B cell (primary cell): ENCODE measurements at regions of chr14 and their contacts with region 1.

Region 1: DNA sequence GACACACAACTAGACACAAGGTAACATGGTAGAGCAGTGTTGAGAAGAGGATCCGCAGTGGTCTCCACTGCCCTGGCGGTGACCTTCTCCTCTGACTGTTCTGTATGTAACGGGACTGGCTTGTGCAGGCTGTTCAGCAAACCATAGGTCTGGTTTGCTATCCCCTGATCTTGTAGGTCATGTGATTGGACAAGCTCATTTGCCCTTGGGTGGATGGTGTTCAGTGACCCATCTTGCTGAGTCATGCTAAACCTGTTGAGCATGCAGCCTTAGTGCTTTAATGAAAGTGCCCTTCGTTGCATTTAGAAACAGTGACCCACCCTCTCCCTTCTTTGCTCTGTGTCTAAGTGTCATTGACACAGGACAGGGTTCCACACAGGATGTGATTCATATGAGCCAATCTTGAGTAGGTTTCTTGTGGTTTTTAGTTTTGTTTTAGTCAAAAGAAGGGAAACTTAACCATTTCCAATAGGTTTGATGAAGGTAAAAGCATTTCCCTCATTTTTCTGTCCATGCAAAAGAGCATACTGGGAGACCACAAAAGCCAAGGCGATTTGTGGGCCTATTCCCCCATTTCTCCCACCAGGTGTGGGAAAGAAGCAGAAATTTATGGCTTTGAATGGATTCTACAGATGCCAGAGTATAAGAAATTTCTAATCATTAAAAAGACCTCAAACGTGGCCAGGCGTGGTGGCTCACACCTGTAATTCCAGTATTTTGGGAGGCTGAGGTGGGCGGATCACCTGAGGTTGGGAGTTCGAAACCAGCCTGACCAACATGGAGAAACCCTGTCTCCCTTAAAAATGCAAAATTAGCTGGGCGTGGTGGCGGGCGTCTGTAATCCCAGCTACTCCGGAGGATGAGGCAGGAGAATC is 32.6 kb upstream of the HIF1A start:
- DNase-seq: peak; percentile 59
- ATAC-seq: peak; percentile 66
- H3K4me3 ChIP-seq: peak overlapping the region in 1 of 5 experiments; percentile 52
- H3K4me3 Mint-ChIP-seq: peak overlapping the region; percentile 84
- H3K27ac ChIP-seq: peak overlapping the region; percentile 48 to 82
- H3K27ac Mint-ChIP-seq: peak overlapping the region; percentile 91
- H3K4me1 ChIP-seq: peaks cover 59 to 60% of the 10 kb centered on the region in 2 donors
- H3K4me1 Mint-ChIP-seq: peaks cover 59% of the 10 kb centered on the region
- H3K27me3 ChIP-seq: no peaks in the 10 kb centered on the region
- H3K27me3 Mint-ChIP-seq: no peaks in the 10 kb centered on the region
- CTCF ChIP-seq: no peak

Region 2: DNA sequence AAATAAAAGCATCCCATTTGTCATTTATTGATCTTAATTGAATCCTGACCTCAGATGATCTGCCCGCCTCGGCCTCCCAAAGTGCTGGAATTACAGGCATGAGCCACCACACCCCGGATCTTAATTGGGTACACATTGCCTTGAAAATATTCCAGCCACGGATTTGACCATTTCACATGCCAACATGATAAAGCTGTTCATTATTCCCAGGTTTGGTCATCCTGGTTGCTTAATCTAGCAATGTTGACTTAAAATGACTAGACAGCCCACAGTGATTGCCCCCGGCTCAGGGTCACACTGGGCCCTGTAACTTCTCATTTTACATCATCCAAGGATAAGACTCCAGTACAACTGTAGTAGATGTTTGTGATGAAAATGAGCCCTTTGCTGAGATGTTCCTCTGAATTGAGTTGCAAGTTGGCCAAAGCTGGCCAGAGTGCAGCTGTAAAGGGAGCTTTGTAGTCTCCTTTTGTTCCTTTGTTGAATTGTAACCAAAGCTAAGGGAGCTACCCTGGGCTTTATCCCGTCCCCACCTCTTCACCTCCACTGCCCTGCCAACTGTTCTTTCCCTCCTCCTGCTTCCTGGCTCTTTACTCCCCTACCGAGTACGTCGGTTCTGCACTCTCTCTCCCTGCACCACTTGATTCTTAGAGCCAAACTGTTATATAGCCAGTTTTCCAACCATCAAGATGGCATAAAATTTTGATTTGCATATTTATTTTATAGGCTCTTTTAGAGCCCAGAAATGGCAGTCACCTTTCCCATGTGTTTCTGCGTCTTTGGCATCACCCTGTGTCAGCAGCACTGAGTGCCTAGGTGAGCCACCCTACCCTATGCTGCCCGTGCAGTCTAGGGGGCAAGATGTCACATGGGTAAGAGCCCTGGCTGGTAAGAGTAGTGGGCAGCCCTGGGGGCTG is 108.7 kb before region 1 on chr14:
- CTCF ChIA-PET with region 1: interaction called, 4 read pairs
- POLR2A ChIA-PET with region 1: no interaction called
- intact Hi-C with region 1: loop called (anchors 5 kb)
- DNase-seq: no peak
- ATAC-seq: no peak
- H3K4me3 ChIP-seq: peak overlapping the region in 1 of 5 experiments; percentile 4
- H3K4me3 Mint-ChIP-seq: peak overlapping the region; percentile 85
- H3K27ac ChIP-seq: peak overlapping the region; percentile 74 to 81
- H3K27ac Mint-ChIP-seq: peak overlapping the region; percentile 98
- H3K4me1 ChIP-seq: peaks cover 32 to 47% of the 10 kb centered on the region in 2 donors
- H3K4me1 Mint-ChIP-seq: peaks cover 58% of the 10 kb centered on the region
- H3K27me3 ChIP-seq: no peaks in the 10 kb centered on the region
- H3K27me3 Mint-ChIP-seq: no peaks in the 10 kb centered on the region
- CTCF ChIP-seq: no peak

Region 3: DNA sequence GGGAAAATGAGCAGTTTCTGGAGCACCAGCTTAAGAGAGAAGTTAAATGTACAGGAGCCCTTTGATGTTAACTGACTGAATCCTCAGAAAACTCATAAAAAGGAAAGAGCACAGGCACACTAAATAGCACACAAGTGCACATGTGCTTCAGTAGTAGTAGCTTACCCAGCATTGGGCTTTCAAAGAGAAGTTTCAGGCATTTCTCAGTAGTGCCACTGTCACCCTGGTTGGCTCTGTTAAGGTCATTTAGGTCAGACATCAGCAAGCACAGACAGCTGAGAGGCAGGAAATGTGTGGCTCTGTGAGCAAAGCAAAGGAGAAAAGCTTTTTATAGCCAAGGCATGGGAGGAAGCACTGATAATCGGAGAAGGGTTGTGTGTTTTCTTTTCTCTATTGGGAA is 63.7 kb before region 1 on chr14:
- CTCF ChIA-PET with region 1: no interaction called
- POLR2A ChIA-PET with region 1: no interaction called
- intact Hi-C with region 1: no loop called
- DNase-seq: peak; percentile 20
- ATAC-seq: peak; percentile 28
- H3K4me3 ChIP-seq: no peak overlapping the region
- H3K4me3 Mint-ChIP-seq: peak overlapping the region; percentile 21
- H3K27ac ChIP-seq: peak overlapping the region in 1 of 2 donors; percentile 20
- H3K27ac Mint-ChIP-seq: peak overlapping the region; percentile 55
- H3K4me1 ChIP-seq: peaks cover 22 to 25% of the 10 kb centered on the region in 2 donors
- H3K4me1 Mint-ChIP-seq: peaks cover 38% of the 10 kb centered on the region
- H3K27me3 ChIP-seq: no peaks in the 10 kb centered on the region
- H3K27me3 Mint-ChIP-seq: no peaks in the 10 kb centered on the region
- CTCF ChIP-seq: no peak

Region 4: GRCh38 chr14:61678975-61679374 is 16.3 kb after region 1 on chr14:
- CTCF ChIA-PET with region 1: no interaction called
- POLR2A ChIA-PET with region 1: no interaction called
- intact Hi-C with region 1: no loop called
- DNase-seq: no peak
- ATAC-seq: no peak
- H3K4me3 ChIP-seq: no peak overlapping the region
- H3K4me3 Mint-ChIP-seq: no peak overlapping the region
- H3K27ac ChIP-seq: no peak overlapping the region
- H3K27ac Mint-ChIP-seq: no peak overlapping the region
- H3K4me1 ChIP-seq: no peaks in the 10 kb centered on the region
- H3K4me1 Mint-ChIP-seq: peaks cover 3% of the 10 kb centered on the region
- H3K27me3 ChIP-seq: no peaks in the 10 kb centered on the region
- H3K27me3 Mint-ChIP-seq: no peaks in the 10 kb centered on the region
- CTCF ChIP-seq: no peak